Natural killer cell (primary cell): ENCODE measurements at regions of chr17 and their contacts with region 1.

Region 1: GRCh38 chr17:39174907-39175694 is 9.1 kb upstream of the ARL5C start:
- DNase-seq: peak; percentile 75 to 93
- ATAC-seq: peak; percentile 80 to 96 (median 94)
- H3K4me3 ChIP-seq: no peak overlapping the region
- H3K4me3 Mint-ChIP-seq: no peak overlapping the region
- H3K27ac ChIP-seq: no peak overlapping the region
- H3K27ac Mint-ChIP-seq: no peak overlapping the region
- H3K4me1 ChIP-seq: peaks cover 7% of the 10 kb centered on the region
- H3K4me1 Mint-ChIP-seq: peaks cover 0 to 15% of the 10 kb centered on the region in 2 donors
- H3K27me3 ChIP-seq: no peaks in the 10 kb centered on the region
- H3K27me3 Mint-ChIP-seq: no peaks in the 10 kb centered on the region
- CTCF ChIP-seq: peak; percentile 92

Region 2: DNA sequence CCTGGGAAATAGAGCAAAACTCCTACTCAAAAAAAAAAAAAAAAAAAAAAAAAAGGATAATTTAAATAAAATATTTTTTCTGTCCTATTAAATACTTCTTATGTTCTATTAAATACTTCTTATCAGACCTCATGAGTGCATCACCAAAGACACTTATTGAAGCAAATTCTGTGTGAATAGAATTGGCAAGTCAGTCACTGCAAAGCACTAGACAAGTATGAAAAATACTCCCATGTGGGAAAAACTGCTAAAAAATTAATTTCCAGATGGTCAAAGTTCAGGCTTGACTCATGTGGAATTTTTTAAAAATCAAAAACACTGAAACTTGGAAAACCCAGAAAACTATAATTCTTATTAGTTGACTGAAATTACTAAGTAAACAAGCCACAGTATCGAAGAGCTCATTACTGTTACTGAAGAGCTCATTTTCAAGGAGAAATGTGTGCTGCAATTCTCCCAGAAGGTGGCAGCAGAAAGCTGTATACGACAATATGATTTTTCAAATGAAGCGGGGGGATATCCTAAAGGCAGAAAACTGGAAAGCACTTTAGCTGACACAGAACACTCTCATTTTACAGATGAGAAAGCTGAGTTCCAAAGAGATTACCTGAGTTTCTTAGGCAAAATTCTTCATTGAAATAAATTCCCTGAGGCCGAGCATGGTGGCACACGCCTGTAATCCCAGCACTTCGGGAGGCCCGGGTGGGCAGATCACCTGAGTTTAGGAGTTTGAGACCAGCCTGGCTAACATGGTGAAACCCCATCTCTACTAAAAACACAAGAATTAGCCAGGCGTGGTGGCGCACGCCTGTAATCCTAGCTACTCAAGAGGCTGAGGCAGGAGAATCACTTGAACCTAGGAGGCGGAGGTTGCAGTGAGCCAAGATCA is 192.0 kb before region 1 on chr17:
- intact Hi-C with region 1: loop called (anchors 1 kb)
- DNase-seq: peak in 1 of 2 donors; percentile 84
- ATAC-seq: peak; percentile 68 to 80 (median 77)
- H3K4me3 ChIP-seq: no peak overlapping the region
- H3K4me3 Mint-ChIP-seq: no peak overlapping the region
- H3K27ac ChIP-seq: no peak overlapping the region
- H3K27ac Mint-ChIP-seq: no peak overlapping the region
- H3K4me1 ChIP-seq: no peaks in the 10 kb centered on the region
- H3K4me1 Mint-ChIP-seq: peaks cover 0 to 6% of the 10 kb centered on the region in 2 donors
- H3K27me3 ChIP-seq: no peaks in the 10 kb centered on the region
- H3K27me3 Mint-ChIP-seq: peaks cover 0 to 2% of the 10 kb centered on the region in 2 donors
- CTCF ChIP-seq: peak; percentile 87

Region 3: DNA sequence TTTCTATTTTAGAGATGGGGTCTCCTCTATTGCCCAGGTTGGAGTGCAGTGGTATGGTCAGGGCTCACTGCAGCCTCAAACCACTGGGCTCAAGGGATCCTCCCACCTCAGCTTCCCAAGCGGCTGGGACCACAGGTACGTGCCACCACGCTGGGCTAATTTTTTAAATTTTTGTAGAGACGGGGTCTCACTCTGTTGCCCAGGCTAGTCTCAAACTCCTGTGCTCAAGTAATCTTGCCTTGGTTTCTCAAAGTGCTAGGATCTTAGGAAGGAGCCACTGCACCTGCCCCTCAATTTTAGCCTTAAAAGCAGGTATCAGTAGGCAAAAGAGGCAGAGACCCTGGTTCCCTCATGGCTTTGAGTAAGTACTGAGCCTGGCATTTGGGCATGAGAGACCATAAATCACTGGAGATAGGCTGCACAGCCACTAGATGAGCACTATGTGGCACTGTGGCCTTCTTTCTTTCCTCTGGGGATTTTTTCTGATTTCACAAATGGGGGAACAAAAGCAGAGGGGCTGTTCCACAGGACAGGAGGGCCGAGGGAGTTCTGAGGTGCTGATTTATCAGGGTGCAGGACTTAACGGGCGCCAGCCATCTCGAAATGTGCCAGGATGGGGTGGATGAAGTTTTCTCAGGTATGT is 105.9 kb before region 1 on chr17:
- intact Hi-C with region 1: loop called (anchors 1 kb)
- DNase-seq: peak in 1 of 2 donors; percentile 75
- ATAC-seq: peak; percentile 71 to 98 (median 93)
- H3K4me3 ChIP-seq: no peak overlapping the region
- H3K4me3 Mint-ChIP-seq: no peak overlapping the region
- H3K27ac ChIP-seq: no peak overlapping the region
- H3K27ac Mint-ChIP-seq: peak overlapping the region in 1 of 2 donors; percentile 11
- H3K4me1 ChIP-seq: peaks cover 5% of the 10 kb centered on the region
- H3K4me1 Mint-ChIP-seq: peaks cover 6 to 12% of the 10 kb centered on the region in 2 donors
- H3K27me3 ChIP-seq: no peaks in the 10 kb centered on the region
- H3K27me3 Mint-ChIP-seq: peaks cover 0 to 3% of the 10 kb centered on the region in 2 donors
- CTCF ChIP-seq: peak; percentile 65